WTC11 (cell line): ENCODE measurements at regions of chr16 and their contacts with region 1.

Region 1: GRCh38 chr16:71537643-71538042 is 11.4 kb downstream of the CHST4 start:
- DNase-seq: peak; percentile 66
- ATAC-seq: peak; percentile 87
- H3K4me3 Mint-ChIP-seq: no peak overlapping the region
- H3K27ac Mint-ChIP-seq: no peak overlapping the region
- H3K4me1 Mint-ChIP-seq: peaks cover 4% of the 10 kb centered on the region; the same call in 1 of the 2 replicates
- H3K27me3 Mint-ChIP-seq: no peaks in the 10 kb centered on the region
- CTCF ChIP-seq: peak; percentile 51; the same call in 1 of the 2 replicates

Region 2: DNA sequence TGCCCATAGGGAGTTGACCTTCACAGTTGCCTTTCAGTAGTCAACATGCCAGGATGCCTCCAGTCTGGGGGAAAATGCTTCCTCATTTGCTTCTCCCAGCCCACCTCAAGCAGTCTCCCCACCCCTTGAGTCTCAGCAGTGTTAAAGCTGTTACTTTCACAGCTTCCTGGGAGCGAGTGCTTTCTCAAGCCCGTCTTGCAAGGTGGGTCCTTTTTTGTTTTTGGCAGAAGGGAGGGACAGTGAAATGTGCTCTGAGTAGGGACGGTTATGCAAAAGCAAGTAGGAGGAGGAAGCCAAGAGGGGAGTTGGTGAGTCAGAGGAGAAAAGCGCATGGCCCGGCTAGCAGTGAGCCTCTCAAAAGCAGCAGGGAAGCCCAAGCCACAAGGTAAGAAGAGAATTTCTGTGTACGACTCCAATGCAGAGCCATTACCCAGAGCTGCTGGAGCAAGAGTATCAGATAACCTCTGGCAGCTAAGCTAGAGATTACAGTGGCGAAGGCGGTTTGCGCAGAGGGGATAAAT is 11.5 kb before region 1 on chr16 and contains the start of gene CHST4:
- CTCF ChIA-PET with region 1: interaction called, 21 read pairs
- POLR2A ChIA-PET with region 1: no interaction called
- DNase-seq: peak; percentile 75
- ATAC-seq: peak; percentile 89
- H3K4me3 Mint-ChIP-seq: peak within 1 kb of the TSS; percentile 74
- H3K27ac Mint-ChIP-seq: peak within 1 kb of the TSS; percentile 99
- H3K4me1 Mint-ChIP-seq: peaks cover 45% of the 10 kb centered on the region
- H3K27me3 Mint-ChIP-seq: no peaks in the 10 kb centered on the region; the same call in 1 of the 2 replicates
- CTCF ChIP-seq: no peak
- total RNA-seq, gene CHST4: 9.9 to 12.8 TPM (median 12.0 TPM) in 3 replicates

Region 3: GRCh38 chr16:71564155-71564967 is 26.7 kb after region 1 on chr16:
- CTCF ChIA-PET with region 1: interaction called, 16 read pairs
- POLR2A ChIA-PET with region 1: no interaction called
- DNase-seq: no peak
- ATAC-seq: peak; percentile 3
- H3K4me3 Mint-ChIP-seq: peak overlapping the region; percentile 85
- H3K27ac Mint-ChIP-seq: peak overlapping the region; percentile 75
- H3K4me1 Mint-ChIP-seq: peaks cover 14% of the 10 kb centered on the region
- H3K27me3 Mint-ChIP-seq: peaks cover 16% of the 10 kb centered on the region
- CTCF ChIP-seq: no peak